GM13977 (cell line): ENCODE measurements at regions of chr12 and their contacts with region 1.

Region 1: DNA sequence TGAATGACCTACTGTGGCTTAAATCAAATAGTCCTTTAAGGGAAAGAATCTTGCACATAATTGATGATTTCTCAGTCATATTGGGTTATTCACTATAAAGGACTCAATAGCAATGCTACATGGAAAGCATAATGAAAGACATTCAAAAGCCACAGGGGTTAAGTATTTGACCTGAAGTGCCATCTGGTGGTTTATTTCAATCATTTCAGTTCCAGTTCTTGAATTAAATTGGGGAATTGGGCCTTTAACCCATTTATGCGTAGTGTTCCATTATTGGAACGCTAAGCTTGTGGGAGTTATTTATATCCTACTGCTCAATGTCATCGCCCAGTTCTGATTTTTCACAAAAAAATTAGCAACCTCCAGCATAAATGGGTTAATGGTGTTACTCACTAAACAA is 41.3 kb upstream of the C12orf71 start:
- DNase-seq: peak; percentile 12
- CTCF ChIP-seq: peak; percentile 30

Region 2: GRCh38 chr12:27034607-27035293 is 88.9 kb before region 1 on chr12:
- in situ Hi-C with region 1: loop called (anchors 10 kb)
- DNase-seq: no peak
- CTCF ChIP-seq: no peak